Activated CD8-positive, alpha-beta T cell treated with anti-CD3 and anti-CD28 coated beads for 36 hours (primary cell): ENCODE measurements at regions of chr14 and their contacts with region 1.

Region 1: GRCh38 chr14:21071225-21072030 is 1.3 kb downstream of the ARHGEF40 start:
- DNase-seq: peak; percentile 76
- ATAC-seq: peak; percentile 76
- H3K4me3 Mint-ChIP-seq: peak overlapping the region; percentile 69
- H3K27ac Mint-ChIP-seq: no peak overlapping the region
- H3K4me1 Mint-ChIP-seq: peaks cover 31% of the 10 kb centered on the region
- H3K27me3 Mint-ChIP-seq: peaks cover 56% of the 10 kb centered on the region
- CTCF ChIP-seq: no peak

Region 2: DNA sequence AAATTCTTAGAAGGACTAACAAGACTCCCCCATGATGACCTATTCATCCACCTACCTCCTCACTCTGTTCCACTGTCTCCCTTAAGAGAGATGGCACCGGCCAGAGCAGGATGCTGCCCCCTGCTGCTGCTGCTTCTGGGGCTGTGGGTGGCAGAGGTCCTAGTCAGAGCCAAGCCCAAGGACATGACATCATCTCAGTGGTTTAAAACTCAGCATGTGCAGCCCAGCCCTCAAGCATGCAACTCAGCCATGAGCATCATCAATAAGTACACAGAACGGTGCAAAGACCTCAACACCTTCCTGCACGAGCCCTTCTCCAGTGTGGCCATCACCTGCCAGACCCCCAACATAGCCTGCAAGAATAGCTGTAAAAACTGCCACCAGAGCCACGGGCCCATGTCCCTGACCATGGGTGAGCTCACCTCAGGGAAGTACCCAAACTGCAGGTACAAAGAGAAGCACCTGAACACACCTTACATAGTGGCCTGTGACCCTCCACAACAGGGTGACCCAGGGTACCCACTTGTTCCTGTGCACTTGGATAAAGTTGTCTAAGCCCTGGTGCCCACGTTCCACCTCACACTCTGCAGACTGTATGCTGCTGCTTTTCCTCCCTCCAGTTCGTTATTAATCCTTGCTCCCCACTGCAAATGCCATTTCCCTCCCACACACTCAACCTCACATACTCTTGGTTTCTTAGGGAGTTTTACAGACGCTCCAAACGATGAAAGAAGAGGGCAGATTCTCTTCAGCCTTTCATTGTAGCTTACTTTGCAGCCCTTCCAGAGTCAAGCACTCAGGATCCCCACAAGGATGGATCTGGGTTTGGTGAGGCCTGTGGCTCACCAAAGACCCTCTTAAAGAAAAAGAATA is 13.4 kb before region 1 on chr14 and contains the start of gene RNASE8:
- CTCF ChIA-PET with region 1: interaction called, 10 read pairs
- POLR2A ChIA-PET with region 1: interaction called, 3 read pairs
- intact Hi-C with region 1: no loop called
- DNase-seq: no peak
- ATAC-seq: peak; percentile 42
- H3K4me3 Mint-ChIP-seq: no peak within 1 kb of the TSS
- H3K27ac Mint-ChIP-seq: no peak within 1 kb of the TSS
- H3K4me1 Mint-ChIP-seq: no peaks in the 10 kb centered on the region
- H3K27me3 Mint-ChIP-seq: peaks cover 15% of the 10 kb centered on the region
- CTCF ChIP-seq: no peak
- total RNA-seq, gene RNASE8: not detected

Region 3: GRCh38 chr14:21109377-21110260 is 38.2 kb after region 1 on chr14:
- CTCF ChIA-PET with region 1: interaction called, 121 read pairs
- POLR2A ChIA-PET with region 1: interaction called, 16 read pairs
- intact Hi-C with region 1: loop called (anchors 2 kb)
- DNase-seq: peak; percentile 57
- ATAC-seq: peak; percentile 83
- H3K4me3 Mint-ChIP-seq: no peak overlapping the region
- H3K27ac Mint-ChIP-seq: no peak overlapping the region
- H3K4me1 Mint-ChIP-seq: peaks cover 16% of the 10 kb centered on the region
- H3K27me3 Mint-ChIP-seq: no peaks in the 10 kb centered on the region
- CTCF ChIP-seq: no peak